ENCODE measurements at regions of chr12 and their contacts with region 1.

Region 1: DNA sequence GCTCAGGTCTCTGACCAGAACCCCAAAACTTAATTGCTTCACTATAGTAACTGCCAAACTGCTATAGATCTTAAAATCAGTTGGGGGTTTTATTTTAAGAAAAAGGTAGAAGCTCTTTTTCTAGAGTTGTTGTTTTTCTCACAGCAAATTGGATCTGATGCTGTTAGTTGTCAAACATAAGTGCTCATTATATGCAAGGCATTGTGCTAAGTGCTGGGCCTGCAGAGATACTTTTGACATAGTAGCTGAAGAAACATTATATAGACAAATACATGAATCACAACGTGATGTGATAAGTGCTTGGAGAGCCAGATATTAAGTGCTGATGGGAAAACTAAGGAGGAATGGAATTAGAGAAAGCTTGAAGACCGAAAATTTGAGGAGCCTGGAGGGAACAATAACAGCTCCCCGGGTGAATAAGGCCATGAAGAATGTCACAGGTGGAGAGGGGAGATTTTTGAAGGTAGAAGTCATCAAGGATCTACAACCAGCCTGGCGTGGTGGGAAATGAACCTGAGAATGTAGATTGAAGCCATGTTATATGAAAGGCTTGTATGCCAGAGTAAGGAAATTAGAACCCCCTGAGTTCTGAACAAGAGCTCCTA is 126.5 kb downstream of the DYRK2 start:
- DNase-seq: no peak
- ATAC-seq: no peak
- H3K4me3 ChIP-seq: no peak overlapping the region
- H3K27ac ChIP-seq: no peak overlapping the region
- H3K4me1 ChIP-seq: peaks cover 4 to 25% (median 17%) of the 10 kb centered on the region in 9 donors
- H3K27me3 ChIP-seq: no peaks in the 10 kb centered on the region
- CTCF ChIP-seq: no peak

Region 2: GRCh38 chr12:67853204-67853603 is 78.1 kb after region 1 on chr12:
- intact Hi-C with region 1: no loop called
- DNase-seq: no peak
- ATAC-seq: no peak
- H3K4me3 ChIP-seq: no peak overlapping the region
- H3K27ac ChIP-seq: no peak overlapping the region
- H3K4me1 ChIP-seq: no peaks in the 10 kb centered on the region
- H3K27me3 ChIP-seq: no peaks in the 10 kb centered on the region
- CTCF ChIP-seq: no peak

Region 3: GRCh38 chr12:67910360-67911274 is 135.5 kb after region 1 on chr12:
- intact Hi-C with region 1: loop called in 1 of 10 experiments (anchors 1 kb)
- DNase-seq: peak in 1 of 2 donors; percentile 10
- ATAC-seq: peak; percentile 67 to 89 (median 79)
- H3K4me3 ChIP-seq: peak overlapping the region in 1 of 10 donors; percentile 5
- H3K27ac ChIP-seq: peak overlapping the region; percentile 21 to 89 (median 76)
- H3K4me1 ChIP-seq: peaks cover 0 to 24% (median 0%) of the 10 kb centered on the region in 9 donors
- H3K27me3 ChIP-seq: no peaks in the 10 kb centered on the region
- CTCF ChIP-seq: no peak